Dorsolateral prefrontal cortex (tissue), 120 donors: ENCODE measurements at regions of chr14 and their contacts with region 1.

Region 1: GRCh38 chr14:51239813-51240803 is at the start of gene TMX1:
- DNase-seq: peak; percentile 84 to 96 (median 95)
- H3K4me3 ChIP-seq: peak within 1 kb of the TSS; percentile 63 to 100 (median 93)
- H3K27ac ChIP-seq: peak within 1 kb of the TSS; percentile 29 to 92 (median 85)
- H3K27me3 ChIP-seq: no peaks in the 10 kb centered on the region
- CTCF ChIP-seq: peak in 48 of 56 donors; percentile 13 to 70 (median 44)
- total RNA-seq, gene TMX1: 9.6 to 23.7 (median 15.6) TPM

Region 2: GRCh38 chr14:51006781-51007211 is 233.3 kb before region 1 on chr14:
- intact Hi-C with region 1: loop called in 1 of 2 experiments (anchors 5 kb)
- DNase-seq: peak in 9 of 10 donors; percentile 66 to 86 (median 74)
- H3K4me3 ChIP-seq: peak overlapping the region in 9 of 59 donors; percentile 4 to 32 (median 17)
- H3K27ac ChIP-seq: peak overlapping the region; percentile 59 to 92 (median 83)
- H3K27me3 ChIP-seq: no peaks in the 10 kb centered on the region
- CTCF ChIP-seq: peak in 2 of 56 donors; percentile 18 to 24

Region 3: GRCh38 chr14:51507906-51508511 is 267.9 kb after region 1 on chr14:
- intact Hi-C with region 1: no loop called
- DNase-seq: peak; percentile 15 to 70 (median 56)
- H3K4me3 ChIP-seq: peak overlapping the region in 4 of 59 donors; percentile 22 to 33 (median 28)
- H3K27ac ChIP-seq: peak overlapping the region in 51 of 59 donors; percentile 1 to 85 (median 61)
- H3K27me3 ChIP-seq: no peaks in the 10 kb centered on the region
- CTCF ChIP-seq: no peak